ENCODE measurements at regions of chr12 and their contacts with region 1.

Region 1: DNA sequence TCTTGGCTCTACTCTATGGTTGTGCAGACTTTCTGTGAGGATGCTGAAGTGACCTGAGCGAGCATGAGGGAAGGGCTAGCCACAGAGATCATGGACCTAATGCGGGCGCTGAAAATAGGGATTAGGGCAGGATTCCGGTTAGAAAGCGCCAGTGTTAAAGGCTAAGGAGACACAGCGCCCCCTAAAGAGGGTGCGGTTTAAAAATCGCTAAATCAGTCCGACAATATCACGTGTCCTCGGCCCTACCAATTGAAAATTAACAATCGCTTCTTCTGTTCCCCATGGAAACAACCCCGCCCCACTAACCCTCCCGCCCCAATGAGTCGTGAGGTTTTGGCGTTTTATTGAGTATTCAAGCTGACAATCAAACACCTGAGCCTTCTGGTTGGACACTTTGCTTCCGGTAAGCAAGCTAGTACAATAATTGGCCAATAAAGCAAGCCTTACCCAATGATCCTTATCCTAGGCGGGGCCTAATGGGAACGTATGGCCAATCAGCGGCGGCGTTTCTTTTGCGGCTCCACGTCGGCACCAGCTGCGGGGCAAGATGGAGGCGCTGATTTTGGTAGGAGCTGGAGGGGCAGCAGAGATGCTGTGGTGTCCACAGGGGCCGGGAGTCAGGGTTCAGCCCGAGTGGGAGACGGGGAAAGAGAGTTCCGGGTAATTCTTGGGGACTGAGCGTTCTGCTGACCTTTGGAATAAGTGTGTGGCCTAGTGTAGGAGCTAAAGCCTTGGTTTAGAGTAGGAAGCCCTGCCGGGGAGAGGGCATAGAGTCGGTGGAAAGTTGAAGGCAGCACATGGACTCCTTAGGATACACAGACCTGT is at the start of gene COPZ1:
- DNase-seq: peak; percentile 97
- H3K4me3 Mint-ChIP-seq: peak within 1 kb of the TSS; percentile 95
- H3K27ac Mint-ChIP-seq: peak within 1 kb of the TSS; percentile 84
- H3K4me1 Mint-ChIP-seq: peaks cover 33% of the 10 kb centered on the region
- H3K27me3 Mint-ChIP-seq: no peaks in the 10 kb centered on the region
- total RNA-seq, gene COPZ1: 99.0 to 110 TPM

Region 2: GRCh38 chr12:54251667-54252284 is 73.1 kb before region 1 on chr12:
- CTCF ChIA-PET with region 1: interaction called, 12 read pairs
- POLR2A ChIA-PET with region 1: interaction called, 3 read pairs
- intact Hi-C with region 1: no loop called
- DNase-seq: no peak
- H3K4me3 Mint-ChIP-seq: no peak overlapping the region
- H3K27ac Mint-ChIP-seq: no peak overlapping the region
- H3K4me1 Mint-ChIP-seq: peaks cover 9% of the 10 kb centered on the region
- H3K27me3 Mint-ChIP-seq: no peaks in the 10 kb centered on the region

Region 3: DNA sequence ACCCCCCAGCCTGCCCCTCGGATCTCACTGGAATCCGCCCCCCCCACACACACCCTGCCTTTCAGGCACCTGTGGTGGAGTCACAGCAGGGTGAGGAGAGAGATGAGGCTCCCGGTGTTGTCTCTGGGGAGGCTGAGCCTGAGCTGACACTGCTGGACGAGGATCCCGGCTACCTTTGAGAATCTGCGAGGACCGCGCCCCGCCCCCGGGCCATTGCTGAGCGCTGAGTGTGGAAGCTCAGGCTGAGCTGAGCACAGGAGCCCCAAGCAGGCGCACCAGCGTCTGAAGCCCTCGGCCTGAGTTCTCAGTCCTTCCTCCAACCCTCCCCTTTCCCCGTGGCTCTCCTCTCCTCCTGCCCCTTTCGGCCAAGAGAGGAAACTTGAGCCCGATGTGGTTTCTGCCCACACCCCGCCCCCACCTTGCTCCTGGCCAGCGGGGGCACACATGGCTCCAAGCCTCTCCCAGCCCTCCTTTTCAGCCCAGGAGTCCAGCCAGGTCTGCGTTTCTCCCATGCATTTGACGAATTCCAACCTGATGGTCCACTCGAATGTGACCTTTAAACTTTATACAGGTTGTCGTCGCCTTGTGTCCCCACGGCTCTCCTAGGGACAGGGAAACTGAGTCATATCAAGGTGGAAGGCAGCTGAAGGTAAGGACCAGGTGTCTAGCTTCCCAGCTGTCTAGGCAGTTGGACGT is 23.9 kb before region 1 on chr12 and contains the start of gene NFE2:
- CTCF ChIA-PET with region 1: interaction called, 45 read pairs
- POLR2A ChIA-PET with region 1: interaction called, 3 read pairs
- intact Hi-C with region 1: no loop called
- DNase-seq: peak; percentile 56
- H3K4me3 Mint-ChIP-seq: peak within 1 kb of the TSS; percentile 21
- H3K27ac Mint-ChIP-seq: no peak within 1 kb of the TSS
- H3K4me1 Mint-ChIP-seq: peaks cover 9% of the 10 kb centered on the region
- H3K27me3 Mint-ChIP-seq: peaks cover 47% of the 10 kb centered on the region
- total RNA-seq, gene NFE2: not detected

Region 4: DNA sequence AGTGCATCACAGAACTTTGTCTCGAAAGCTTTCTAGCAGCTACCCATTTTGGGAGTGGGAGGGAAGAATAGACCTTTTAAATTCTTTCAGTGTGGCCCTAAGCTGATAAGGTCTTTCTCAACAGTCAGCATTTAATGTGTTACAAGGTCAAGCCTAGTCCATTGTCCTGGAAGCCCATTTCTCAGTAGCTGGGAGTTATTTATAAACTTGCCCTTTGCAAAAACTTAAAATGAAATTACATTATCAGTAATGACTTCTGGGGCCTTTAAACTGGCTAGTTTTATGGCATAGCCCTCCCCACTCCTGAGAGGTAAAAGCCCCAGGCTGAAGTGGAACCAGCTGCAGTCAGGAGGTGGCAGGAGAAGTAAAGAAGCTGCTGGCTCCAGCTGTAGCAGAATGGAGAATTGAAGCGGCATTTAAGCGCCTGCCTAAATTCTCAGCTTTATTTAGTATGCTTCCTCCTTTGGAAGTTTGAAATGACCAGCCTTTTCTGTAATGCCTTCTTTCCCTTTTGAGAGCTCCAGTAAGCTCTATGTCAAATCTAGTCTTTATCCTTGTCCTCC is 12.5 kb after region 1 on chr12:
- CTCF ChIA-PET with region 1: interaction called, 84 read pairs
- POLR2A ChIA-PET with region 1: interaction called, 8 read pairs
- intact Hi-C with region 1: no loop called
- DNase-seq: no peak
- H3K4me3 Mint-ChIP-seq: no peak overlapping the region
- H3K27ac Mint-ChIP-seq: no peak overlapping the region
- H3K4me1 Mint-ChIP-seq: peaks cover 18% of the 10 kb centered on the region
- H3K27me3 Mint-ChIP-seq: no peaks in the 10 kb centered on the region

Region 5: GRCh38 chr12:54359033-54359761 is 34.4 kb after region 1 on chr12:
- CTCF ChIA-PET with region 1: interaction called, 14 read pairs
- POLR2A ChIA-PET with region 1: interaction called, 11 read pairs
- intact Hi-C with region 1: loop called (anchors 1 kb)
- DNase-seq: peak; percentile 97
- H3K4me3 Mint-ChIP-seq: no peak overlapping the region
- H3K27ac Mint-ChIP-seq: no peak overlapping the region
- H3K4me1 Mint-ChIP-seq: peaks cover 16% of the 10 kb centered on the region
- H3K27me3 Mint-ChIP-seq: no peaks in the 10 kb centered on the region

Region 6: DNA sequence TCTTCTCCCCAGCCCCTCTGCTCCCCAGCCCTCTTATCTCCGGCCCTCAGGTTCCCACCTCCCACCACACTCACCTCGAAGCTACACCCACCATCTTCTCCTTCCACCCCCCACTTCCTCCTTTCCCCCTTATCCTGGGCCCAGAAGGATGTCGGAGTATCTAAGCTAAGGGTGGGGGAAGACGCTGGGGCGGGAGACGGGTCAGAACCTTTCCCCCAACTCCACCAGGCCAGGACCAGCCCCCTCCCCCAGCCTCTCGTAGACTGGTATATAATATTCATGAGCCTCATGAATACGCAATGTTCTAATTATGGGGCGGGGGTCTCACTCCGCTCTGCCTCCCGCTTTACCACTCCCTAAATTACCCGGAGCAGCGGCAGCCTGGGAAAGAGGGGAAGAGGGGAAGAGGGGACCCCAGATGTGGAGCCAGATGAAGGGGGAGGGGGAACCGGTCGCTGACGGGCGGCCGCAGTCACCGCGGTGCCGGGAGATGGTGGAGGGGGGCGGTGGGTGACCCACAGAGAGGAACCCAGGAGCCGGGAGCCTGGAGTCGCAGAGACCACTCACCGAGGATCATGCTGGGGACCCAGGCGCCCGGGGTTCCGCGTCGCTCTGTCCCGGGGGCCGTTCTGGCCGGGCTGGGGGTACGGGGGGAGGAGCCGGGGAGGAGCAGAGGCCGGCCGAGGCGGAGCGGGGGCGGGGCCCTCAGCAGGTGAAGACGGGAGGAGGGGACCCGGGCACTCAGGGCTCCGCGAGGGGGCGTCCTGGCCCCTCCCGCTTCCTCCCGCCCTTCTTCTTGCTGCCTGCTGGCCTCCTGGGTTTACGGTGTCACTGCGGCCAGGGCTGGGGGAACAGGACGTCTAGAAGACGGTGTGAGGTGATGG is 66.1 kb after region 1 on chr12:
- CTCF ChIA-PET with region 1: no interaction called
- POLR2A ChIA-PET with region 1: no interaction called
- intact Hi-C with region 1: no loop called
- DNase-seq: peak; percentile 79
- H3K4me3 Mint-ChIP-seq: peak overlapping the region; percentile 64
- H3K27ac Mint-ChIP-seq: no peak overlapping the region
- H3K4me1 Mint-ChIP-seq: peaks cover 26% of the 10 kb centered on the region
- H3K27me3 Mint-ChIP-seq: no peaks in the 10 kb centered on the region

Region 7: DNA sequence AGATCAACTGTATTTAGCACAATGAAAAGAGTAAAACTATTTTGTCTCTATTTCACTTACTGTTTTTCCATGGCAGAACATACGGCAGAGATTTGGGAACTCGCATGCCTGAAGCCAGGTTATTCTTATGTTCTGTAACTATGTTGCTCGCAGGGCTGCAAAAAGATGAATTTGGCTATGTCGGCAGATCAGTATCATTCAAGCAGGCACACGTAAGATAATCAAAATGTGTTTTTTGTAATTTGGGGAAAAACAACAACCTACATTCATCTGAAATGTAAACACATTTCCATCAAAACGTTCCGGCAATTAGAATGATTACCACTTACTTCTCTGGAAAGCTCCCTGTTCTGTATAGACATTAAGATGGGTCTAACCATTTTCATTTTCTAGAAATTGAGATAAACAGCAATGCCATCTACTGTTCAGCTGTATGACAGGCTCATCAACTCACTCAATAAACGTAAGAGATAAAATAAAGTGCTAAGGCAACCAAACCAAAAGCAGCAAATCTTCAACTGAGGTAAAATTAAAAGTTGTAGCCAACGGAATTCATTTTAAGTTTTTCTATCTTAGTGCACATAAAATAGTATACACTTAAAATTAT is 135.6 kb after region 1 on chr12:
- CTCF ChIA-PET with region 1: no interaction called
- POLR2A ChIA-PET with region 1: no interaction called
- intact Hi-C with region 1: no loop called
- DNase-seq: no peak
- H3K4me3 Mint-ChIP-seq: no peak overlapping the region
- H3K27ac Mint-ChIP-seq: no peak overlapping the region
- H3K4me1 Mint-ChIP-seq: peaks cover 2% of the 10 kb centered on the region
- H3K27me3 Mint-ChIP-seq: peaks cover 11% of the 10 kb centered on the region